GM10248 (cell line): ENCODE measurements at regions of chr14 and their contacts with region 1.

Region 1: GRCh38 chr14:22472935-22473854 is 115.8 kb downstream of the DAD1 start:
- DNase-seq: peak; percentile 71
- CTCF ChIP-seq: peak; percentile 61

Region 2: DNA sequence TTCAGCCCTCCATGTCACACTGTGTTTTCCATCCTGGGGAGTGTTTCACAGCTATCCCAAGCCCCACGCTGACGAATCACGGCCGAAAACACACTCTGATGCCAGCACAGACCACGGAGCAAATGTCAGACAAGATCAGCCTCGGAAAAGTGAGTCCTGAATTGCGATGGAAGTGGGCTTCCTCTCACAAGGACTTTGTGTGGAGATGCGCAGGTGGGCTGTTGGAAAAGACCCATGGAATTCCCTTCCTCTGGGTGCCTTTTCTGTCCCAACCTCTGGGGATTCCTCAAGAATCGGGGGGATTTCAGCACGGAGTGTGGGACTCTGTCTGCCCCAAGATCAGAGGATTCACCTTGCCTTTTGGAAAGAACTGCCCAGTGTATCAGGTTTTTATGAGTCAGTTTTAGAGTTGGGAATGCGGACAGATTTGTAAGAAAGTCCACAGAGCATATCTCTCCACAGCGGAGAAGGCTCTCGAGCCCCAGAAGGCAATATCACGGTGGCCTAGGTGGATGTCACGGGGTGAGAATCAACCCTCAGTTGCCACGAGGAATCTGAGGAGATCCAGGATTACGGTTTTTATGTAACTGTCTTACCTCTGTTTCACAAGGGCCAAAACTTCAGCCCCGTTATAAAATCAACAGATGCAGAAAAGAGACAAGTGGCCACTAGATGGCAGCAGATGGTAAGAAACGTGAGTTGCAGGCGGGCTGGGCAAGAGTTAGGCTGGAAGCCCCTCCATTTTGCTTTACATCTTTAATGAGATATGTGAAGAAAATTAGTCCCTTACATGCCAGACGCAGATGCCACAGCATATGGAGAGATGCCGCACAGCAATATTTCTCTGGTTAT is 86.0 kb before region 1 on chr14:
- CTCF ChIA-PET with region 1: interaction called, 322 read pairs
- POLR2A ChIA-PET with region 1: interaction called, 3 read pairs
- DNase-seq: peak; percentile 79
- CTCF ChIP-seq: peak; percentile 76

Region 3: GRCh38 chr14:22418631-22419030 is 54.6 kb before region 1 on chr14:
- CTCF ChIA-PET with region 1: interaction called, 16 read pairs
- POLR2A ChIA-PET with region 1: no interaction called
- DNase-seq: peak; percentile 28
- CTCF ChIP-seq: no peak

Region 4: DNA sequence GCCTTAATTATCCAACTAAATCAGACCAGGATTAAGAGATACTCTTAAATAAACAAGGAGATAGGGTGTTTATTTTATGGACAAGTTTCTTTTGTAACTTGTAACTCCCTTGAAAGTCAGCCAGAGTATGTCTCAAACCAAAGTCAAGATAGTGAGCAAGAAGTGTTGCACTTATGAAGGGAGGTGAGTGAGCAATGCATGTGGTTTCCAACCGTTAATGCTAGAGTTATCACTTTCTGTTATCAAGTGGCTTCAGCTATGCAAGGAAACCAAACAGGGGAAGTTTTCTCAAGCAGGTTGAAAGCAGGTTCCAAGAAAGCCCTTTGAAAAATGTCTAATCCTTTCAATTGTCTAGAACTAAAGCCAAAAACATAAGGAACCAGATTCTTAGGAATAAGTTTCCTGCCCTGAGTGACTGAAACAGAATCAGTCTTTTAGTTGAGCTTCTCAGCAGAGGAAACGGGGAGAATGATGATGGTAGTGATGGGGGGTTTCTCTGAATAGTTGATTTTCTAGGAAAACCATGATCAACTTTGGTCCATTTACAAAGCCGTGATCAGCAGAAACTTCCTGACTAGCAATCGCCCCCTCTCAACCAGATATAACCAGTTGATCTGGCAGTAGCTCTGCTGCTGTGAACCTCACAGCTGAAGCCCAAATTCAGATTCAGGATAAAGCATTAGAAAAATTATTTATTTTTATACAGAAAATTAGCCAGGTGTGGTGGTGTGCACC is 12.6 kb before region 1 on chr14:
- CTCF ChIA-PET with region 1: interaction called, 44 read pairs
- POLR2A ChIA-PET with region 1: interaction called, 3 read pairs
- DNase-seq: peak; percentile 37
- CTCF ChIP-seq: no peak

Region 5: GRCh38 chr14:22505697-22506377 is 32.6 kb after region 1 on chr14:
- CTCF ChIA-PET with region 1: interaction called, 22 read pairs
- POLR2A ChIA-PET with region 1: interaction called, 6 read pairs
- DNase-seq: peak; percentile 48
- CTCF ChIP-seq: no peak